A673 (cell line): ENCODE measurements at regions of chr19 and their contacts with region 1.

Region 1: DNA sequence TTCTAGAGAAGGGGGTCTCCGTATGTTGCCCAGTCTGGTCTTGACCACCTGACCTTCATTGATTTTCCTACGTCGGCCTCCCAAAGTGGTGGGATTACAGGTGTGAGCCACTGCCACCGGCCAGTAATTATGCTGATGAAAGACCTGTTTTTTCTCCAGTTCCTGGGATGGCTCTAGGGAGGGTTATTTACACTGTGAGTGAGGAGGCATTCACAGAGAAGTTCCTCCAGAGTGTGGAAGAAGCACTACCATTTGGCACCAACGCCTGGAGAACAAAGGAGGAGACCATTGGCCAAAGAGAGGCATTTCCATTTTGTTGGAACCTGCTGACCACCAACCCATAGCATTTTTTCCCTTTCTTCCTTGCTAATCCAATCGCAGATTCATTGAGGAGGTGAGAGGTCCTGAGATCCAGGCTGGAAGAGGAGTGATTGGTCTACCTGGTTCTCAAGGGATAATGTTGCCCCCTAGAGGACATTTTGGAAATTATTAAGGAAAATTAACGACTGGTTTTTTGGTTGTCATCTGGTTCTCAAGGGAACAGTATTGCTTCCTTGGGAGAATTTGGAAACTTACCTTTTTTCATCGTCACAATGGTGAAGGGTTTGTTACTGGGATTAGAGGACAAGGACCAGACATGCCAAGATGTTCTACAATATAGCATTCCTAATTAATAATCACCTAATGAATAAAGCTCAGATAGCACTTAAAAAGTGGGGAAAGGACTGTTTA is 5.5 kb upstream of the SAE1 start:
- DNase-seq: peak; percentile 86
- H3K4me3 ChIP-seq: no peak overlapping the region
- H3K27ac ChIP-seq: no peak overlapping the region
- H3K4me1 ChIP-seq: no peaks in the 10 kb centered on the region
- H3K27me3 ChIP-seq: no peaks in the 10 kb centered on the region
- CTCF ChIP-seq: peak; percentile 72

Region 2: GRCh38 chr19:46821498-46822409 is 303.3 kb before region 1 on chr19:
- CTCF ChIA-PET with region 1: no interaction called
- POLR2A ChIA-PET with region 1: no interaction called
- intact Hi-C with region 1: no loop called
- DNase-seq: no peak
- H3K4me3 ChIP-seq: no peak overlapping the region
- H3K27ac ChIP-seq: no peak overlapping the region
- H3K4me1 ChIP-seq: peaks cover 3% of the 10 kb centered on the region
- H3K27me3 ChIP-seq: no peaks in the 10 kb centered on the region
- CTCF ChIP-seq: no peak

Region 3: DNA sequence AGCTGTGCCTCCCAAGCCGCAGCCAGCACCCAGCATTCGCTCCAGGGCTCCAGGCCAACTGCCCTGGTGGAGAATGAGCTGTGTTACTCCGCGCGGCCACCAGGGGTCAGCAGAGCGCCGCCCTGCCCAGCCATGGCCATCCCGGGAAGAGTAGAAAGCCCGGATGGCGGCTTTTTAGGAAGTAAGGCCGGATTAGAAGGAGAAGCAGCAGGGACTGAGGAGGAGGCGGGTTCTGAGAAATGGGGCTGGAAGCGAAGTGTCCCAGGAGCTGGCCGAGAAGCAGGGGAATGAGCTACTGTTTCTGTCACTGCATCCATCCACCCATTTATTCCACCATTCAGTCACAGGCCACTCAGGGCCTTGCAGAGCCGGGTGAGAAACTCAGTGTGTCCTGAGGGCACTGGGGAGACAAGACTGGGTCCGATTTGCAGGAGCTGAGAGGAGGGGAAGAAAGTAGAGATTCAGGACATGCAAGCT is 112.0 kb before region 1 on chr19:
- CTCF ChIA-PET with region 1: interaction called, 3 read pairs
- POLR2A ChIA-PET with region 1: no interaction called
- intact Hi-C with region 1: loop called (anchors 1 kb)
- DNase-seq: peak; percentile 86
- H3K4me3 ChIP-seq: no peak overlapping the region
- H3K27ac ChIP-seq: no peak overlapping the region
- H3K4me1 ChIP-seq: no peaks in the 10 kb centered on the region
- H3K27me3 ChIP-seq: no peaks in the 10 kb centered on the region
- CTCF ChIP-seq: peak; percentile 99

Region 4: DNA sequence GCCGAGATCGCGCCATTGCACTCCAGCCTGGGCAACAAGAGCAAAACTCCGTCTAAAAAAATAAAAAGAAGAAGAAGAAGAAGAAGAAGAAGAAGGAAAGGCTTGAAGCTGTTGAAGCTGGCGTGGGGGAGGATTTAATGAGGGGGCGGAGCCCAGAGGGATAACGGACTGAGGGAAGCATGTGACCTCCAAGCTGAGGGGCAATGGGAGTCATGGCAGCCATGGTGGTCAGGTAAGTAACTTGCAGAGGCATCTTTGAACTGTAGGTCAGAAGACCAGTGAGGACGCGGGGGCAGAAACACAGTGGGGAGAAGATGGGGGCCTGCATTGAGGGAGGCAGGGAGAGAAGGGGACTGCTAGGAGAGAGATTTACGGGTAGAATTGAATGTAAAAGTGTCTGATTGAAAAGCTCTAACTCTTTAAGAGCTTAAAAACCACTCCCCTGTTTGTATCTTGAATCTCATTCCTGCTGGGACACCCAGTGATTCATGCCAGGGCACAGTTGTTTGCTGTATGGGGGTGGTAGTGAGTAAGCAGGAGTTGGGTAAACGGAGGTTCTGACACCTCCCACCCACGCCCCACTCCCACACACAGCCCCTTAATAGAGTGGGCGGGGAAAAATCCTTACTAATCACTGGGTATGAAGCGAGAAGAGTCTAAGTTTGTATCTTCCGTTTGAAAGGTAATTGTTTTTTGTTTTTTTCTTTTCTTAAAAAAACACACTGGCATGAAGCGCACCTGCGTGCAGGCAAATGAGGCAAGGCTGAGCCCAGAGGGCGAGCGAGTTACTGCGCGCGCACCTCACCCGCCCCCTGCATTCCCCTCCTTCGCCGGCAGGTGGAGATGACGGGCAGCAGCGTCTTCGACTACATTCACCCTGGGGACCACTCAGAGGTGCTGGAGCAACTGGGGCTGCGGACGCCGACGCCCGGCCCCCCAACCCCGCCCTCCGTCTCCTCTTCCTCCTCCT is 89.7 kb before region 1 on chr19:
- CTCF ChIA-PET with region 1: no interaction called
- POLR2A ChIA-PET with region 1: no interaction called
- intact Hi-C with region 1: loop called (anchors 1 kb)
- DNase-seq: peak; percentile 92
- H3K4me3 ChIP-seq: peak overlapping the region; percentile 56
- H3K27ac ChIP-seq: peak overlapping the region; percentile 57
- H3K4me1 ChIP-seq: peaks cover 8% of the 10 kb centered on the region
- H3K27me3 ChIP-seq: no peaks in the 10 kb centered on the region
- CTCF ChIP-seq: peak; percentile 94

Region 5: GRCh38 chr19:47057328-47057727 is 67.8 kb before region 1 on chr19:
- CTCF ChIA-PET with region 1: no interaction called
- POLR2A ChIA-PET with region 1: no interaction called
- intact Hi-C with region 1: no loop called
- DNase-seq: no peak
- H3K4me3 ChIP-seq: no peak overlapping the region
- H3K27ac ChIP-seq: no peak overlapping the region
- H3K4me1 ChIP-seq: no peaks in the 10 kb centered on the region
- H3K27me3 ChIP-seq: no peaks in the 10 kb centered on the region
- CTCF ChIP-seq: no peak

Region 6: DNA sequence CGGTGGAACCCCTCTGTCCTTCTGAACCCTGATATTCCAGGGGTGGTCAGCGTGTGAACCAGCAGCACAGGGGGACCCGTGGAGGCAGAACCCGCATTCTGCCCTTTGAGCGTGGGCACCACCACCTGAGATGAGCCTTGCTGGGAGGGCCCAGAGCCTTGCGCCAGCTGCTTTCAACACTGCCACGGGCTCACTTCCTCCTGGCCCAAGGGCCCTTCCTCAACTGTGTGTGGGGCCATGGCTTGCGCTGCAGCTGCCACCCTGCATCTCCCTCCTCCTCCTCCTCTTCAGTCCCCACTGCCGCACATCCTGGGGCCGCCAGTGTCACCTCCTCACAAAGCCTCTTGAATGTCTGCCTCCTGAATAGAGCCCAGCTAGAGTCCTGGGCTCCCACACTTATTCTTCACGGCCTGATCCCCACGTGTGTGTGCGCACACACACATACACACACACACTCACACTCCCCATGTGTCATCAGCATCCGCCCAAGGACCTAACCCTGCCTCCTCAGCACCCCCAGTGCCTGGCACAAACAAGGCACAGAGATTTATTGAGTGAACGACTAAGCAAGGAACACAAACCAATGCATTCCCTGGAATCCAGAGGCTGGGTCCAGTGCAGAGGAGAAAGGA is 49.8 kb before region 1 on chr19:
- CTCF ChIA-PET with region 1: interaction called, 3 read pairs
- POLR2A ChIA-PET with region 1: no interaction called
- intact Hi-C with region 1: loop called (anchors 1 kb)
- DNase-seq: no peak
- H3K4me3 ChIP-seq: no peak overlapping the region
- H3K27ac ChIP-seq: no peak overlapping the region
- H3K4me1 ChIP-seq: no peaks in the 10 kb centered on the region
- H3K27me3 ChIP-seq: no peaks in the 10 kb centered on the region
- CTCF ChIP-seq: no peak

Region 7: DNA sequence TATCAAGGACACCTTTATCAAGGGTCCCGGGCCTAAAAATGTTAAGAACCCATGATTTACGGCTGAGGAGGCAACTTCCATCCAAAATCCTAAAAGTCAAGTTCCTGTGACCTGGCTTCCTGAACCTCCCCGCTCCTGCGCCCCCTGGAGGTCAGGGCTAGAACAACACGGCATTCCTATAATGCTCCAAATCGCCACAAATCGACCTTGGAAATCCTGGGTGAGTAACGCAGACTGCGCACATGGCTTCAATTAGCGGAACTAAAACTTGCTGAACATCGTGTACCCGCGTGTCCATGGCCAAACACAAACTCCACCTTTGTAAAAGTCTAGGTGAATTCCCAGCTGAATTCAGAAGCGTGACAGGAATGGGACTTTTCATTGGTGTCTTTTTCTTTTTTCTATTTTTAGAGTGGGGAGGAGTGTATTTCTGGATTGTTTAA is 180.2 kb after region 1 on chr19:
- CTCF ChIA-PET with region 1: no interaction called
- POLR2A ChIA-PET with region 1: no interaction called
- intact Hi-C with region 1: no loop called
- DNase-seq: peak; percentile 80
- H3K4me3 ChIP-seq: no peak overlapping the region
- H3K27ac ChIP-seq: no peak overlapping the region
- H3K4me1 ChIP-seq: no peaks in the 10 kb centered on the region
- H3K27me3 ChIP-seq: no peaks in the 10 kb centered on the region
- CTCF ChIP-seq: peak; percentile 97